Posterior cingulate gyrus (tissue), 11 donors: ENCODE measurements at regions of chr6 and their contacts with region 1.

Region 1: DNA sequence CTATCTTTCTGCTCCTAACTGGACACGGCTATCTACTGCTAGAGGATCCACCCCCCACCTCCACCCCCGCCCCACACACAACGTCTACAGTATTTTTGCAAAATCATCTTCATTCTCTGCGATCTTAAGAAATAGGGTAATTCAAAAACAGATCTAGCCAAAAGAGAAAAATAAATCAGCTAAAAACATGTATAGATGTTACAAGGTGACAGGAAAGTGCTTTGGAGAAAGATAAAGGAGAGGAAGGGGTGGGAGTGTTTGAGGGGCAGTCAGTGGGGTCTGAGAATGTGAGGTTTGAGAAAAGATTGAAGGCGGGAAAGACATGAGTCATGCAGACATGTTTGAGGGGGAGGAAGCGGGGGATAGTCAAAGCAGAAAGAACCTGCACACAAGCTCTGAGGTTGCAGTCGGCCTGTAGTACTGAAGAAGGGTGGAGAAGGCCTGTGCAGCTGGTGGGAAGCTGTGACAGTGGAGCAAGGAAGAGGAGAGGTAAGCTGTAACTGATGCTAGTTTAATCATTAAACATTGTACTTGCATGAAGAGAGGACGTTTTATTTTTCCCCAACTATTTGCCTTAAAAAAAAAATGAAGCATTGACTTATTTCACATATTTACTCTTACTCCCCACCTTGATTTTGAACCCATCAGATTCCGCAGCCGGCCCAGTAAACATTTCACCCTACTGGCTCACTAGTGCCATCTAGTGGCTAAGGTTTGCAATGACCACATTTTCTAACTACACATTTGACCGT is 332.6 kb downstream of the ADGRB3 start:
- DNase-seq: peak in 7 of 10 donors; percentile 27 to 83 (median 51)

Region 2: GRCh38 chr6:68559070-68559469 is 408.7 kb before region 1 on chr6:
- intact Hi-C with region 1: loop called (anchors 5 kb)
- DNase-seq: no peak

Region 3: GRCh38 chr6:68634726-68635411 is 332.9 kb before region 1 on chr6 and contains the start of gene ADGRB3:
- intact Hi-C with region 1: loop called (anchors 5 kb)
- DNase-seq: peak; percentile 83 to 99 (median 92)

Region 4: GRCh38 chr6:68876792-68877493 is 90.8 kb before region 1 on chr6:
- intact Hi-C with region 1: loop called (anchors 5 kb)
- DNase-seq: no peak